Right cardiac atrium (tissue), 5 donors: ENCODE measurements at regions of chr17 and their contacts with region 1.

Region 1: DNA sequence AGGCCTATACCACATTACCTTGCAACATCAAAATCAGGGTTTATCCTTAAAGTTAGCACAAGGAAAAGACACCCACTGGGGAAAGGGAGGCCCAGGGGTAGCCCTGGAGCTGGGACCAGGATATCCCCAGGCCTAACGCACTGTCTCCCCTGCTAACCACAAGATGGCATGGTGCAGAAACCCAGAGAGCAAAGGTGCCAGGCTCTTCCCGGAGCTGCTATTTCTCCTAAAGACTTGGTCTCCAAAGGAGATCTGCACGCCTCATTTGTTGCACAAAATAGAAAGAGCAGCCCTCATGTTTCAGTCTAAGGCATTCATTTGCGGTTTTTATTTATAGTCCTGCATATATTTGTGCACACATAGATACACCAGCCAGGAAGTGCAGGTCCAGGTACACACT is 408.6 kb downstream of the SOX9 start:
- DNase-seq: no peak
- ATAC-seq: no peak
- H3K4me3 ChIP-seq: no peak overlapping the region
- H3K27ac ChIP-seq: no peak overlapping the region
- H3K4me1 ChIP-seq: no peaks in the 10 kb centered on the region
- H3K27me3 ChIP-seq: no peaks in the 10 kb centered on the region

Region 2: GRCh38 chr17:72104164-72104862 is 425.1 kb before region 1 on chr17:
- intact Hi-C with region 1: loop called in 1 of 4 experiments (anchors 10 kb)
- DNase-seq: peak; percentile 82 to 89 (median 84)
- ATAC-seq: peak; percentile 78 to 80
- H3K4me3 ChIP-seq: no peak overlapping the region
- H3K27ac ChIP-seq: no peak overlapping the region
- H3K4me1 ChIP-seq: no peaks in the 10 kb centered on the region
- H3K27me3 ChIP-seq: no peaks in the 10 kb centered on the region